Mammary epithelial cell (primary cell): ENCODE measurements at regions of chr15 and their contacts with region 1.

Region 1: GRCh38 chr15:39171944-39172368 is 408.9 kb upstream of the THBS1 start:
- DNase-seq: peak; percentile 97
- H3K4me3 ChIP-seq: no peak overlapping the region
- H3K27ac ChIP-seq: peak overlapping the region; percentile 95
- H3K4me1 ChIP-seq: peaks cover 33% of the 10 kb centered on the region
- H3K27me3 ChIP-seq: no peaks in the 10 kb centered on the region
- CTCF ChIP-seq: peak; percentile 37 to 67

Region 2: GRCh38 chr15:38991126-38991525 is 180.8 kb before region 1 on chr15:
- CTCF ChIA-PET with region 1: no interaction called
- dilution Hi-C with region 1: no loop called
- in situ Hi-C with region 1: no loop called
- intact Hi-C with region 1: loop called (anchors 10 kb)
- DNase-seq: peak; percentile 24
- H3K4me3 ChIP-seq: no peak overlapping the region
- H3K27ac ChIP-seq: no peak overlapping the region
- H3K4me1 ChIP-seq: peaks cover 15% of the 10 kb centered on the region
- H3K27me3 ChIP-seq: no peaks in the 10 kb centered on the region
- CTCF ChIP-seq: peak; percentile 52 to 64

Region 3: DNA sequence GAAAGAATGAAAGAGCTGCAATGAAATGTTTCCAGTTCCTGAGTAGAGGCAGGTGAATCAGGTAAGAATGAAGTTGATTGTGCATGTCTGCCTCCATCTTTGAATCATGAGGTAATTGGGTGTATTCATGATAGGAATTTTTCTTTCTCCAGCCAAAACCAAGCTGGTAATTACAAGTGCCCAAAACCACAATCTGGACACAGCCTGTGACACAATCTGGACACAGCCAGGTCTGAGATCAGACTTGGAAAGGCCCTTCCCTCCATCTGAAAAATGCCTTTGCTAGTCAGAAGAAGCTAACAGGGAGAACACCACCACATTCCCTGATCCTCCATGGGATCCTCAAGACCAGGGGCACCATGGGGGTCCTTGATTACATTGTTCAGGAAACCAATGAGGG is 70.4 kb after region 1 on chr15:
- CTCF ChIA-PET with region 1: no interaction called
- dilution Hi-C with region 1: no loop called
- in situ Hi-C with region 1: no loop called
- intact Hi-C with region 1: no loop called
- DNase-seq: peak; percentile 90
- H3K4me3 ChIP-seq: no peak overlapping the region
- H3K27ac ChIP-seq: no peak overlapping the region
- H3K4me1 ChIP-seq: peaks cover 33% of the 10 kb centered on the region
- H3K27me3 ChIP-seq: no peaks in the 10 kb centered on the region
- CTCF ChIP-seq: no peak

Region 4: GRCh38 chr15:39301589-39301999 is 129.6 kb after region 1 on chr15:
- CTCF ChIA-PET with region 1: no interaction called
- dilution Hi-C with region 1: no loop called
- in situ Hi-C with region 1: no loop called
- intact Hi-C with region 1: loop called (anchors 2 kb)
- DNase-seq: peak; percentile 20
- H3K4me3 ChIP-seq: no peak overlapping the region
- H3K27ac ChIP-seq: peak overlapping the region; percentile 43
- H3K4me1 ChIP-seq: peaks cover 67% of the 10 kb centered on the region
- H3K27me3 ChIP-seq: no peaks in the 10 kb centered on the region
- CTCF ChIP-seq: no peak

Region 5: DNA sequence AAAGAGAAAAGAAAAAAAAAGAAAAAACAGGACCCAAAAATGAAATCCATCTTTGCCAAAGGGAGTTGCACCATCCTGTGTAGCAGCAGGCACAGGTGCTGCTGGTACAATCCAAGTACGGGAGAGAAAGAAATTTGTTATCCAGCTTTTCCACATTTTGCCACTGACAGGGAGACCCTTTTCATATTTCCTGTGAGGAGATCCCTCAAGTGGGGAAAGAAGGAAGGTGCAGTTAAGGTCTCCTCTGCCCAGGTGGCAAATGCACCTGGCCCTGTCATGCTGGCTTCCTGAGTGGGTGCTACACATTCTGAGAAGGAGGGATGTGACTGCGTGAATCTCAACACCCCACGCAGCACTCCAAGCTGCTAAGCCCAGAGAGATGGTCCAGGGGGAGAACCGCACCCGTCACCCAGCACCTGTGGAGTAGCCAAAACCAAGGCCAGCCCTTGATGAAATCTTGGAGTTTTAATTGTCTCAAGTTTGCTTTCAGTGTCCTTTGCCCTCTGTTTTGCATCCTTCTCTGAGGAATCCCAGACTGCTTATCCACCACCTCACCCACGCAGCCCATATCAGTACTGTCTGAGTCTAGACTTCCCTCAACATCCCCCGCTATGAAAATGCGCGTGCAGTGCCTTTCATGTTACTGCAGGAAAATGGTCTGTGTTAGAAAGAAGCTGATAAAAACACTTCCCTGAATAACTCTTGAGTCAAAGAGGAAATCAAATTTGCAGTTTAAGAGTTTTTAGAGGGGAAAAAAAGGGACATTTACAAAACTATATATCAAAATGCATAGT is 267.0 kb after region 1 on chr15:
- CTCF ChIA-PET with region 1: no interaction called
- dilution Hi-C with region 1: no loop called
- in situ Hi-C with region 1: no loop called
- intact Hi-C with region 1: loop called (anchors 1 kb)
- DNase-seq: no peak
- H3K4me3 ChIP-seq: no peak overlapping the region
- H3K27ac ChIP-seq: no peak overlapping the region
- H3K4me1 ChIP-seq: no peaks in the 10 kb centered on the region
- H3K27me3 ChIP-seq: no peaks in the 10 kb centered on the region
- CTCF ChIP-seq: peak in 1 of 2 donors; percentile 35

Region 6: DNA sequence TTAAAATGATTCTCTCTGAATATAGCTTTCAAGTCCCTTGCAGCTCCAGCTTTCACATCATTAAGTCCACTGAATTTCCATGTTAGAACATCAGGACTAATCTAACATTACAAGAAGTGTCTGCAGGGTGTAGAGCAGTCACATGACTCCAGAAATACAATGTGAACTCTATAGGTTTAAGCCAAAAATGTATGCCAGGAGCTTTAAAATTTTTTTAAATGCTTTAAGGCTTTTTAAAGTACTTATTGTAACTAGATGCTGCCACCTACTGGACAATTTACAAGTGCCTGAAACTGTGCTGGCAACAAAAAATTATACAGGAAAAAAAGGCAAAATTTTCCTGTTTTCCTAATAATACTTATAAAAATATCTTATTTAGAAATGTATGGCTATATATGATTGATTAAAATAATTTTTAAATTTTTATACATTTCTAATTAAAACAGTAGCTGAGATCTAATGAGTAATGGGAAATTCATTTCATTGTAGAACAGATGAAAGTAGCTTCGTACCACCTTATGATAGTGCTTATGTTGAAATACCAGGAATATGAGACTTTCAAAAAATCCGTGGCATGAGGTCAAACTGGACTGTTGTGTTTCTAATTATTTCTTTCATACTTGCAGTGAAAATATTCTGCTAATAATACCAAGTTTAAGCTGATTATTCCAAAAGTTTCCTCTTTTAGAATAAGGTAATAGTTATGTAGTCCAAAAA is 585.0 kb after region 1 on chr15:
- CTCF ChIA-PET with region 1: no interaction called
- dilution Hi-C with region 1: no loop called
- in situ Hi-C with region 1: loop called in 1 of 2 experiments (anchors 25 kb)
- intact Hi-C with region 1: loop called (anchors 1 kb)
- DNase-seq: peak; percentile 18
- H3K4me3 ChIP-seq: no peak overlapping the region
- H3K27ac ChIP-seq: no peak overlapping the region
- H3K4me1 ChIP-seq: no peaks in the 10 kb centered on the region
- H3K27me3 ChIP-seq: no peaks in the 10 kb centered on the region
- CTCF ChIP-seq: peak; percentile 64 to 65